ENCODE measurements at regions of chr5 and their contacts with region 1.

Region 1: GRCh38 chr5:74766849-74767578 is at the starts of genes GFM2 and NSA2:
- DNase-seq: peak; percentile 90 to 96
- ATAC-seq: peak; percentile 90 to 97 (median 95)
- H3K4me3 ChIP-seq: peak within 1 kb of the TSS; percentile 94
- H3K4me3 Mint-ChIP-seq: peak within 1 kb of the TSS; percentile 99
- H3K27ac ChIP-seq: peak within 1 kb of the TSS; percentile 67
- H3K27ac Mint-ChIP-seq: peak within 1 kb of the TSS; percentile 96 to 98
- H3K4me1 ChIP-seq: peaks cover 16% of the 10 kb centered on the region
- H3K4me1 Mint-ChIP-seq: peaks cover 27 to 40% of the 10 kb centered on the region in 2 donors
- H3K27me3 ChIP-seq: no peaks in the 10 kb centered on the region
- H3K27me3 Mint-ChIP-seq: no peaks in the 10 kb centered on the region
- CTCF ChIP-seq: no peak
- total RNA-seq, gene GFM2: 11.9 to 27.9 (median 19.1) TPM
- total RNA-seq, gene NSA2: 53.2 to 75.8 (median 74.0) TPM

Region 2: GRCh38 chr5:73565139-73565968 is 1201.7 kb before region 1 on chr5 and contains the starts of genes ANKRA2 and UTP15:
- intact Hi-C with region 1: loop called (anchors 10 kb)
- DNase-seq: peak; percentile 100
- ATAC-seq: peak; percentile 91 to 98 (median 93)
- H3K4me3 ChIP-seq: peak within 1 kb of the TSS; percentile 71
- H3K4me3 Mint-ChIP-seq: peak within 1 kb of the TSS; percentile 99
- H3K27ac ChIP-seq: peak within 1 kb of the TSS; percentile 95
- H3K27ac Mint-ChIP-seq: peak within 1 kb of the TSS; percentile 95 to 100
- H3K4me1 ChIP-seq: peaks cover 15% of the 10 kb centered on the region
- H3K4me1 Mint-ChIP-seq: peaks cover 38 to 40% of the 10 kb centered on the region in 2 donors
- H3K27me3 ChIP-seq: no peaks in the 10 kb centered on the region
- H3K27me3 Mint-ChIP-seq: no peaks in the 10 kb centered on the region
- CTCF ChIP-seq: no peak
- total RNA-seq, gene ANKRA2: 37.4 to 44.4 (median 41.9) TPM
- total RNA-seq, gene UTP15: 33.0 to 46.5 (median 40.9) TPM

Region 3: GRCh38 chr5:74865804-74866595 is 99.0 kb after region 1 on chr5 and contains the start of gene FAM169A:
- intact Hi-C with region 1: loop called (anchors 1 kb)
- DNase-seq: peak; percentile 65 to 74
- ATAC-seq: peak; percentile 77 to 82 (median 78)
- H3K4me3 ChIP-seq: peak within 1 kb of the TSS; percentile 80
- H3K4me3 Mint-ChIP-seq: peak within 1 kb of the TSS; percentile 95
- H3K27ac ChIP-seq: peak within 1 kb of the TSS; percentile 55
- H3K27ac Mint-ChIP-seq: peak within 1 kb of the TSS; percentile 86 to 95
- H3K4me1 ChIP-seq: peaks cover 15% of the 10 kb centered on the region
- H3K4me1 Mint-ChIP-seq: peaks cover 44 to 48% of the 10 kb centered on the region in 2 donors
- H3K27me3 ChIP-seq: no peaks in the 10 kb centered on the region
- H3K27me3 Mint-ChIP-seq: no peaks in the 10 kb centered on the region
- CTCF ChIP-seq: no peak
- total RNA-seq, gene FAM169A: 28.0 to 32.6 (median 28.6) TPM

Region 4: DNA sequence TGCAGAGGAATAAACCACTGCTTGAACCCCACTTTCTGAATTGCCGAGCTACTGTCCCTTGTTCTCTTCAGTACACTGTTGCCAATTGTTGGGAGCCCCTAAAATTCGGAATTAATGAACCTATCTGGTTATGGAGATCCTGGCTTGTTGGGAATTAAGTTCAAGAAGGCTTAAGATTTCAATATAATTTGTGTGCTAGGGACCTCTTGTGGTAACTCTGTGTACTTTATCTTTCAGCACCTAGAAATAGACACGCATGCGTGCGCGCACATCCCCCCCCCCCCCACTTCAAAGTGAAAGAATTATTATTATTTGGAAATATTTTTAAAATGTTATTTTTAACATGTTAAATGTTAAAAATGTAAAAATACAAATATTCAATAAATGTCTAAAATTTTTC is 152.5 kb after region 1 on chr5:
- intact Hi-C with region 1: loop called (anchors 1 kb)
- DNase-seq: peak in 1 of 2 donors; percentile 71
- ATAC-seq: peak; percentile 69 to 90 (median 85)
- H3K4me3 ChIP-seq: no peak overlapping the region
- H3K4me3 Mint-ChIP-seq: no peak overlapping the region
- H3K27ac ChIP-seq: no peak overlapping the region
- H3K27ac Mint-ChIP-seq: no peak overlapping the region
- H3K4me1 ChIP-seq: no peaks in the 10 kb centered on the region
- H3K4me1 Mint-ChIP-seq: peaks cover 0 to 12% of the 10 kb centered on the region in 2 donors
- H3K27me3 ChIP-seq: no peaks in the 10 kb centered on the region
- H3K27me3 Mint-ChIP-seq: no peaks in the 10 kb centered on the region
- CTCF ChIP-seq: peak; percentile 83

Region 5: GRCh38 chr5:76256116-76256889 is 1489.3 kb after region 1 on chr5:
- intact Hi-C with region 1: loop called (anchors 10 kb)
- DNase-seq: peak; percentile 47 to 84
- ATAC-seq: peak; percentile 89 to 100 (median 97)
- H3K4me3 ChIP-seq: no peak overlapping the region
- H3K4me3 Mint-ChIP-seq: no peak overlapping the region
- H3K27ac ChIP-seq: no peak overlapping the region
- H3K27ac Mint-ChIP-seq: peak overlapping the region in 1 of 2 donors; percentile 39
- H3K4me1 ChIP-seq: peaks cover 9% of the 10 kb centered on the region
- H3K4me1 Mint-ChIP-seq: no peaks in the 10 kb centered on the region
- H3K27me3 ChIP-seq: no peaks in the 10 kb centered on the region
- H3K27me3 Mint-ChIP-seq: peaks cover 3 to 10% of the 10 kb centered on the region in 2 donors
- CTCF ChIP-seq: peak; percentile 76

Measured in natural killer cell (primary cell).